Lower leg skin (tissue), 4 donors: ENCODE measurements at regions of chr6 and their contacts with region 1.

Region 1: DNA sequence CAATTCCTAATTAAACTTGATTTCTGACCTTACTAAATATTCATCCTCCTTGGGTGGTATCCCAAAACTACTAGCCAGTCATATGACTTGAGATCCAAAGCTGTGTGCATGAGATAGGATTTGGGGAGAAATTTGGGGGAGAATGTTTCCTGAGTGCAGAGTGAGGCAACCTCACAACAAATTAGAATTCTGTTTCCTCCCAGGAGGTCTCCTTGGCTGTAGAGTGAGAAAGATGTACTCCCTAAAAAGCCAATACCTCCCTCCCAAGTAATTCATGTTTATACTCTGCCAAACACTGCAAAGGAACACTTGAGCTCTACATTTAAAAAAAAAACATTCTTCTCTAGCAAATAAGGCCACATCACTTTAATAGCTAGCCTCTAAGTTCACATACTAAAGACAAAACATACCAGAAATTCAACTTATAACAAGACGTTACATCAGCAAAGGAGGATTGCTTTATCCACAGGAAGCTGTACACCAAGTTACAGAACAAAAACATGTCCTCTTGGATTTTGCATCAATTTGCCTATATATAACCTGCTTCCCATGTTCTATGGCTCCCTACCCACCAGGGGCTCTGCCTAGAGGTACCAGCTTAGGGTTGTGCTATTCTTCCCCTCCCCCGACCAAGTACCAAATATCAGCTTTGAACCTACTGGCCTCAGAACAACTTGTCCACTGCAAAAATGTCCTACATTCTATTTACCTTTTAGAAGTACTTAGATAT is 15.4 kb upstream of the TMEM30A start:
- DNase-seq: no peak
- H3K4me3 ChIP-seq: no peak overlapping the region
- CTCF ChIP-seq: no peak
- POLR2A ChIP-seq: no peak

Region 2: DNA sequence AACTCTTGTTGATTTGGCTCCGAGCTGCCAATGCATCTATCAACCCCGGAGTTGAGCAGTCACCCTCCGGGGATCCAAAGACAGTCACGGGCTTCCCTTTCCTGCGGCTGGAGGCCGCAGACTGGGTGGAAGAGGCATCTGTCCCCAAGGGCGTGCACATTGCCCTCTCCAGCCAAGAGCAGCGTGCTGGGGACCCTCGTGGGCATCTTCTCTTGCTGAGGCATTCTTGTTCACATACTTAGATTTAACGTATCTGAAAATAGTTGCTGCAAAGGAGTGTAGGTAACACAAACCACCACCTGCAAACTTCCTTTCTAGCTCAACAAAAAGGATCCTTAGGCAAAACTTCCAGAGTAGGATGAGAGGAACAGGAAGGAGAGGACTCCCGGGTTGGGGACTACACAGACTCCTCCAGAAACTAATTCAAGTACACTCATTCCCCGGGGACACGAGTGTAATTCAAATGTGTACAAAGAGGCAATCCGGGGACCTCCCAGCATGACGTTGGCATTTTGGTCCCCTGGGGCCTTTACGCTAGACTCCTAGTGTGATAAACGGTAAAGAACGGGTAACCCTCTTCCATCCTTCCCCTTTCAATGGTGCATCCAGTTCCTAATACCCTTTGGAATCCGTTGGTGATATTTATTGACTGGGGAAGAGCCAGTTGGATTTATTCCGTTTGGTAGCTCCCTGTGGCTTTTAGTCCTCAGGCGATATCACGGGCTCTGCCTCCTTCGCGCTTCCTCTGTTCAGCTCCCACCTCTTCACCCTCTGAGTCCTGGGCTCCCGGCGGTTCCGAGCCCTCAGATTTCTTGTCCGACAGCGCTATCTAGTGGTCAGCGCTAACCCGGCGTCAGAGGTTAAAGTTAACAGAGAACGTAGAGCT is 91.4 kb before region 1 on chr6:
- intact Hi-C with region 1: no loop called
- DNase-seq: peak; percentile 86 to 98
- H3K4me3 ChIP-seq: no peak overlapping the region
- CTCF ChIP-seq: peak in 1 of 3 donors; percentile 69
- POLR2A ChIP-seq: no peak

Region 3: DNA sequence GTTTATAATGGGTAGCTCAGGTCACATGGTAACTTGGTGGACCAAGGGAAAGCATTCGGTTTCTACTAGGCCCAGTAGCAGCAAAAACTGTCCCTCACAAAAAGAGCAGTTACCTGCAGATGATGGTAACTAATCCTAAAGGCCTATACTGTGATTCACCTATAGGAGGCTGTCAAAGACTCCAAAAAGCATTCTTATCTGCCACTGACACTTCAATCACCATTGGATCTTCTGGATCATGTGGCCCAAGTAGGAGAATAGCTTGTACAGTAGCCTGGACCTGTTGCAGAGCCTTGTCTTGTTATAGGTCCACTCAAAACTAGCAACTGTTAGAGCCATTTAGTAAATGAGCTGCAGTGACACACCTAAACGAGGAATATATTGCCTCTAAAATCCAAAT is 216.8 kb after region 1 on chr6:
- intact Hi-C with region 1: loop called (anchors 10 kb)
- DNase-seq: no peak
- H3K4me3 ChIP-seq: no peak overlapping the region
- CTCF ChIP-seq: no peak
- POLR2A ChIP-seq: no peak